Activated naive CD8-positive, alpha-beta T cell treated with anti-CD3 and anti-CD28 coated beads, Interleukin-2, amount 10 ng/mL, durations not matched to agents 7 days and 5 days (primary cell): ENCODE measurements at regions of chr1 and their contacts with region 1.

Region 1: GRCh38 chr1:108691942-108692723 is at the start of gene PRPF38B:
- DNase-seq: peak; percentile 93
- ATAC-seq: peak; percentile 84
- H3K4me3 Mint-ChIP-seq: peak within 1 kb of the TSS; percentile 95
- H3K27ac Mint-ChIP-seq: peak within 1 kb of the TSS; percentile 99
- H3K4me1 Mint-ChIP-seq: peaks cover 28% of the 10 kb centered on the region
- H3K27me3 Mint-ChIP-seq: peaks cover 2% of the 10 kb centered on the region
- total RNA-seq, gene PRPF38B: 85.9 to 91.2 TPM

Region 2: DNA sequence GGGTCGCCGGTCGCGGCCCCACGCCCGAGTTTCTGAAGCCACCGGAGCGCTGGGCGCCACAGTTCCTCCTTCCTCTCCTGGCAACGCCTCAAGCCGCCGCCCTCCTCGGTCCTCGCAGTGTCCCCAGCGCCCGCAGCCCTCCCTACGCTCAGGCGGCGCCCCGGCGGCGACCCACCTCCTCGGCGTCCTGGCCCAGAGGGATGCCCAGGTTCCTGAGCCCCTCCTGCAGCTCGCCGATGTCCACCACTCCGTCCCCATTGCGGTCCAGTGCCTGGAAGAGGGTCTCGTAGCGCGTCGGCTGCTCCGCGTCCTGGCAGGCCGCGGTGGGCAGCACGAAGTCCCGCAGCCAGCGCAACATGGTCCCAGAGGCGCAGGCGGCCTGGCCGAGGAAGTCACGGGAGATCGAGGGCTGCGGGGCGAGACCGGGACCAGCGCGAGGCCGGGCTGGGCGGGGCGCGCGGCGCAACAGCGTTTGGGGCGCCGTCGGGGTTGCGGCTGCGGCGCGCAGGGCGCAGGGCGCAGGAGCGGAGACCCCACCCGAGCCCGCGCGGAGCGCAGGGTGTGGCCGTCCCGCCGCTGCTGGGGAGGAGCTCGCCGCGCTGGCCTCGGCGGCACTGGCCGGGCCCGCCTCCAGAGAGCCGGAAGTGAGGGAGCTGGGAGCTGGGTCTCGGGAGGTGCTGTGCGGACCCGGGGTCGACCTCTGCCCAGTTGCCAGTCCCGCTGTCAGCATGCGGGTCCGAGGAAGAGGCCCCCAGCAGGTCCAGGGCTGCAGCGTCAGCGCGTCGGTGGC is 492.2 kb before region 1 on chr1 and contains the start of gene SLC25A24:
- POLR2A ChIA-PET with region 1: interaction called, 10 read pairs
- DNase-seq: peak; percentile 89
- ATAC-seq: peak; percentile 98
- H3K4me3 Mint-ChIP-seq: peak within 1 kb of the TSS; percentile 88
- H3K27ac Mint-ChIP-seq: peak within 1 kb of the TSS; percentile 90
- H3K4me1 Mint-ChIP-seq: peaks cover 28% of the 10 kb centered on the region
- H3K27me3 Mint-ChIP-seq: peaks cover 8% of the 10 kb centered on the region
- total RNA-seq, gene SLC25A24: 25.7 to 26.5 TPM

Region 3: DNA sequence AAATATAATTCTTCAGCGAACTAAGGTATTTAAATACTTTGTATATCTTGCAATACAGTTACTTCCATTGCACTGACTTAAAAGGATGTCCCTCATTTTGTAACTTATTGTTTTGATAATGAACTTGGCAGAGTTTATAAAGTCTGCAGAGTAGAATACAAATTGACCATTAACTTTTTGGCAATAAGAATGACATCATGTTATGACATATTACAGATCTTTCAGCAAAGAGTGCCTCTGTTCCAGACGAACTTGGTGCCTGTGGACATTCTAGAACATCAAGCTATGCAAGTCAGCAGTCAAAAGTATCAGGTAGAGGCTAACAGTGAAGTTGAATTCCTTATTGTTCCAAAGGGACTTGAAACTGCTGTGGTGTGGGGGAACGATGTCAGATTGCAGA is 64.2 kb before region 1 on chr1:
- POLR2A ChIA-PET with region 1: no interaction called
- DNase-seq: no peak
- ATAC-seq: no peak
- H3K4me3 Mint-ChIP-seq: no peak overlapping the region
- H3K27ac Mint-ChIP-seq: no peak overlapping the region
- H3K4me1 Mint-ChIP-seq: peaks cover 3% of the 10 kb centered on the region
- H3K27me3 Mint-ChIP-seq: no peaks in the 10 kb centered on the region

Region 4: GRCh38 chr1:108643492-108644335 is 48.4 kb before region 1 on chr1:
- POLR2A ChIA-PET with region 1: interaction called, 258 read pairs
- DNase-seq: no peak
- ATAC-seq: no peak
- H3K4me3 Mint-ChIP-seq: peak overlapping the region; percentile 20
- H3K27ac Mint-ChIP-seq: peak overlapping the region; percentile 97
- H3K4me1 Mint-ChIP-seq: peaks cover 65% of the 10 kb centered on the region
- H3K27me3 Mint-ChIP-seq: no peaks in the 10 kb centered on the region

Region 5: GRCh38 chr1:108670131-108670773 is 21.9 kb before region 1 on chr1:
- POLR2A ChIA-PET with region 1: interaction called, 13 read pairs
- DNase-seq: no peak
- ATAC-seq: no peak
- H3K4me3 Mint-ChIP-seq: no peak overlapping the region
- H3K27ac Mint-ChIP-seq: no peak overlapping the region
- H3K4me1 Mint-ChIP-seq: peaks cover 11% of the 10 kb centered on the region
- H3K27me3 Mint-ChIP-seq: peaks cover 6% of the 10 kb centered on the region

Region 6: DNA sequence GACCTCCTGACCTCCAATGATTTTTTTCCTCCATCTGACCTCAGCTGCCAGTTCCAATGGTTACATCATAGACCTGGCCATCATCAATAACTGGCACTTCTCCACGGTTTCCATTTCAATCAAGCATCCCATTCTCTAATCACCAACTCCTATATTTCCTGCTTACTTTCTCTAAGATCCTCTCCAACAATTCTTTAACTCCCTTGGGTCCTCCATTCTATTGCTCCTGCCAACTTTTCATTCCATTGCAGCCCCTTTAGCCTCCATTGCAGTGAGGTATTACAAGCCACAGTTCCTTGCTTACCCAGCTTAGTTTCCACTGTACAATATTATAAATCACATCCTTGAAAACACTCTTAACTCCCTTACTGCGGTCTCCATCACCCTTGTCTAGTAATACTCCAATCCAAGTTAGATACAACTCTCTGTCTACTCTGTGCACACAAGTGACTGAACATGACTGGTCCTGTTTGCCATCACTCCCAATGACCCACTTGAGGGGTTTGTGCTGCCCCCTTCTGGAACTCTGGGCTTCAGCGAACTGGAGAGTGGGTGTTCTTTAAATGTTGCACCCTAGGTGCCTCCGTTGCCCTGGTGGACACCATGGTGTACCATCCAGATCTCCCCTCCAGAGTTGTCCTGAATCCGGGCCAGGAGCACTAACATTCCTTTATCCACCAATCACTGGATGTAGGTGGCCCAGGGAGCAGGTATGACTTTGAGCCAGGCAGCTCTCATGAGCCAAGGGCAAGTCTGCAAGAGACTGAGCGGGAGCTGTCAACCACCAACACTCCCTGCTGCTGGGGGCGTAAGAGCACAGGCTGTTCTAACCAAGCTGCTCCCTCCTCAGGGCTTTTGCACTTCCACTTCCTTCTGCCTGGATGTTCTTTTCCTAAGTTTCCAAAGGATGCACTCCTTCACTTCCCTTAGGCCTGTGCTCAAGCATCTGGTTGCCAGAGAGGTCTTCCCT is 16.8 kb after region 1 on chr1:
- POLR2A ChIA-PET with region 1: interaction called, 29 read pairs
- DNase-seq: peak; percentile 53
- ATAC-seq: peak; percentile 92
- H3K4me3 Mint-ChIP-seq: no peak overlapping the region
- H3K27ac Mint-ChIP-seq: no peak overlapping the region
- H3K4me1 Mint-ChIP-seq: peaks cover 13% of the 10 kb centered on the region
- H3K27me3 Mint-ChIP-seq: peaks cover 15% of the 10 kb centered on the region